Brain microvascular endothelial cell (primary cell): ENCODE measurements at regions of chr12 and their contacts with region 1.

Region 1: GRCh38 chr12:63843721-63844390 is 644 bp upstream of the SRGAP1 start:
- DNase-seq: peak; percentile 88
- H3K4me3 ChIP-seq: peak overlapping the region; percentile 96
- H3K27ac ChIP-seq: peak overlapping the region; percentile 74
- H3K27me3 ChIP-seq: no peaks in the 10 kb centered on the region
- CTCF ChIP-seq: peak; percentile 77

Region 2: DNA sequence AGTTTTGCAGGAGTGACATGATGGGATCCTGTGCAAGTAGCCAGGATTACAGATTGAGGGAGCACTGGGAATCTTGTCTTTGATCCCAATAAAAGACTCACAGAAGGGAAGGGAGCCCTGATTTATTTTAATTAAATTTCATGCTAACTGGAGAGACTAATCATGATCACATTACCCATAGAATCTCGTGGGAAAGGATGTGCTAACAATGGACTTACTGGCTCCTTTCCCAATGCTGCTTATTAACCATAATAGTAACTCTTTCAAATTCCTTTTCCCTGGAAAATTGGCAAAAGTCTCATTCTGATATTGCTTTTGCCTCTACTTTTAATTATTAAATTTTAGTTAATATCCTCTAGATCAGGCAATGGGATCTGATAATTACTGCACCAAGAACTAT is 518.1 kb before region 1 on chr12:
- in situ Hi-C with region 1: no loop called
- DNase-seq: no peak
- H3K4me3 ChIP-seq: no peak overlapping the region
- H3K27ac ChIP-seq: no peak overlapping the region
- H3K27me3 ChIP-seq: no peaks in the 10 kb centered on the region
- CTCF ChIP-seq: no peak

Region 3: GRCh38 chr12:64236549-64236948 is 392.7 kb after region 1 on chr12:
- in situ Hi-C with region 1: loop called (anchors 25 kb)
- DNase-seq: peak; percentile 6
- H3K4me3 ChIP-seq: no peak overlapping the region
- H3K27ac ChIP-seq: no peak overlapping the region
- H3K27me3 ChIP-seq: no peaks in the 10 kb centered on the region
- CTCF ChIP-seq: peak; percentile 47